AG04450 (cell line): ENCODE measurements at regions of chr2 and their contacts with region 1.

Region 1: DNA sequence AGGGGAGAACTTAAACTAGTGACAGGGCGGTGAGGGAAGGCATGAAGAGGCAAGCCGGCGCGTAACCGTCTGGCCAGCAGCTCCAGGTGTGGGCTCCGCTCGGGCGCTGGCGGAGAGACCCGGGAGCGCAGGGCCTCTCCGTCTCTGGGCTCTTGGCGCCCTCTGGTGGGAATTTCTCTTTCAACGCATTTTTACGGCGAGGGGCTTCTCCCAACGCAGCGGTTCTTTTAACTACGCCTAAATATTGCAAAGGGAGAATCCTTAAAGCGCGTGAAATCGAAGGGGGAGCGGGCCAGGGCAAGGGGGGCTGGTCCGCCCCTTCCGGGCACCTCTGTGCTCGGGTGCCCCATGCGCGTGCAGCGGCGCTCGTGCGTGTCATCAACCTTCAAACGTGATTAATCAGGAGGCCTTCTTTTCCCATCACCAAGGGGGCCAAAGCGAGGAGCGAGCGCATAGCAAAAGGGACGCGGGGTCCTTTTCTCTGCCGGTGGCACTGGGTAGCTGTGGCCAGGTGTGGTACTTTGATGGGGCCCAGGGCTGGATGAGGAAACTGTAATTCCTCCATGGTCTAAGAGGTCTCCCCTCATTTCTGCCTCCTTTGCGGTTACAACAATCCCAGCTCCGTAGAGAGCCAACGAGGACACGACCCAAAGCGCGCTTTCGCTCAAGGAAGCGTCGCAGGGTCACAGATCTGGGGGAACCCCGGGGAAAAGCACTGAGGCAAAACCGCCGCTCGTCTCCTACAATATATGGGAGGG is 762 bp upstream of the GAD1 start:
- DNase-seq: no peak
- H3K4me3 ChIP-seq: 0 out of 2 replicates have a peak overlapping the region, but pooled peaks have one; percentile 13
- H3K27ac ChIP-seq: no peak overlapping the region
- H3K27me3 ChIP-seq: peaks cover 81% of the 10 kb centered on the region
- CTCF ChIP-seq: peak; percentile 68

Region 2: GRCh38 chr2:170235860-170236679 is 579.9 kb before region 1 on chr2:
- CTCF ChIA-PET with region 1: interaction called, 14 read pairs
- POLR2A ChIA-PET with region 1: no interaction called
- DNase-seq: no peak
- H3K4me3 ChIP-seq: no peak overlapping the region
- H3K27ac ChIP-seq: no peak overlapping the region
- H3K27me3 ChIP-seq: peaks cover 6% of the 10 kb centered on the region
- CTCF ChIP-seq: peak; percentile 62

Region 3: DNA sequence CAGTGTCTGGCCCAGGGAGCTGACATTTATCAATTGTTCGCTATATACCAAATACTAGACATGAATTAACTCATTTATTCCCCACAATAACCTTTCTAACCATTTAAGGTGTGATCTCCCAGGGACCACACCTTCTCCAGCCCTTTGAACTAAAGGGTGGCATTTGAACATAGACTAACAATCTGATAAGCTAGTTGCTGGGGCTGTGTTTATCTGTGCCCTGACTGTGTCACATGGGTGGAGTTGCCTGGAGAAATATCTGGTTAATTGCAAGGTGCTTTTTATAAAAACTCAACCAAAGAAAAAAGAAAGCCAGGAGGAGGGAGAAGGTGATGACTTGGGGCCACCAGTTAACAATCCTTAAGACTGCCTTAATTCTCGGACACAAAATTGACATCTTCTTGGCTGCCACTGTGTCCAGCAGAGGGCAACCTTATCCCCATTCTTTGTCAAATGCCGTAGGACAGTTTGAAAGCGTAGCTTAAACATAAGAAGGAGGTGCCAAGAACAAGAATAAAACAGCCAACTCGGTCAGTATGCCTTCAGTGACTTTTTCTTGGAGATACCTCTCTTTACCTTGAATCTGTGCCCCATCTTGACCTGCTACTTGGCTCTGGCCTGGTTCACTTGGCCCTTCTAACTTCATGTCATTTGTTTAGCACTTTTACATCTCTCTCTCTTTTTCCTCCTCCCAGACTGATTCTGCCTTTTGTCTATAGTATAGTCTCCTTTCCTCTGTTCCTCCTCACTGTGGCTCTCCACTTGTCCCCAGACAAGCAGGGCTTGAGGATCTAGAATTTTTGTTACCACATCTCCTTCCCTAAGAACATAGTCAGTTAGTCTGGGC is 454.6 kb before region 1 on chr2:
- CTCF ChIA-PET with region 1: interaction called, 10 read pairs
- POLR2A ChIA-PET with region 1: no interaction called
- DNase-seq: no peak
- H3K4me3 ChIP-seq: no peak overlapping the region
- H3K27ac ChIP-seq: no peak overlapping the region
- H3K27me3 ChIP-seq: peaks cover 6% of the 10 kb centered on the region
- CTCF ChIP-seq: peak; percentile 71

Region 4: DNA sequence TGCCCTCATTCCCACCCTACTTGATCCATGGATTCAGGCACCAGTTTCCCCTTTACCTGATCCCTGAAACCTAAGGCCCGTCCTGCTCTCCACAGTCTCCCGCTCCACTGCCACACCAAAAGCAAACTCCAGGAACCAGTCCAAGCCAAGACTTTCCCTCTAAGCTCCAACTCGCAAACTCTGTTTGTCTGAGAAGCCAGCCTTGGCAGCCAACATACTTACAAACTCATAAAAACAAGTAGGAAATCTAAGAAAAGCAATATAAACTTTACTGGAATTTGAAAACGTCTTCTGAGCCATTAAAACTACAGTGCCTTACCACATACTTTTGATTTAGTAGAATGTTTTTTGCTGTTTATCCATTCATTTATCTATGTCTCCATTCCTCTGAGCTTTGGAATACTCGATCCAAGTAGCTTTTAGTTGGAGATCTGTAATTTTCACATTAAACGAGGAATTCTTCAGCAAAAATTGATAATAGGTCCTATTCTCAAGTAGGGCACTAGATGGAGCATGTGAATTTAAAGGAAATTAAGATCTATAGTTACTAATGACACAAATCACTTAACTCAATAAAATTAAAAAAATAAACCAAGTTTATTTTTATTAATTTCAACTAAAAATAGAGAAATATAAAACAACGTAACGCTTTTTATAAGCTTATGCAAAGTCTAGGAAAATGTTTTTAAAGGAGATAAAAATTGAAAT is 438.3 kb before region 1 on chr2:
- CTCF ChIA-PET with region 1: interaction called, 15 read pairs
- POLR2A ChIA-PET with region 1: no interaction called
- DNase-seq: no peak
- H3K4me3 ChIP-seq: no peak overlapping the region
- H3K27ac ChIP-seq: no peak overlapping the region
- H3K27me3 ChIP-seq: no peaks in the 10 kb centered on the region
- CTCF ChIP-seq: peak; percentile 28

Region 5: GRCh38 chr2:170715062-170715931 is 100.6 kb before region 1 on chr2 and contains the start of gene SP5:
- CTCF ChIA-PET with region 1: interaction called, 13 read pairs
- POLR2A ChIA-PET with region 1: no interaction called
- DNase-seq: peak; percentile 4
- H3K4me3 ChIP-seq: peak within 1 kb of the TSS; percentile 44
- H3K27ac ChIP-seq: no peak within 1 kb of the TSS
- H3K27me3 ChIP-seq: peaks cover 73% of the 10 kb centered on the region
- CTCF ChIP-seq: 0 out of 2 replicates have a peak, but pooled peaks have one; percentile 1
- polyA plus RNA-seq, gene SP5: not detected in 2 replicates

Region 6: GRCh38 chr2:170932948-170933347 is 117.0 kb after region 1 on chr2:
- CTCF ChIA-PET with region 1: no interaction called
- POLR2A ChIA-PET with region 1: no interaction called
- DNase-seq: no peak
- H3K4me3 ChIP-seq: no peak overlapping the region
- H3K27ac ChIP-seq: no peak overlapping the region
- H3K27me3 ChIP-seq: no peaks in the 10 kb centered on the region
- CTCF ChIP-seq: no peak